CD14-positive monocyte (primary cell): ENCODE measurements at regions of chr19 and their contacts with region 1.

Region 1: DNA sequence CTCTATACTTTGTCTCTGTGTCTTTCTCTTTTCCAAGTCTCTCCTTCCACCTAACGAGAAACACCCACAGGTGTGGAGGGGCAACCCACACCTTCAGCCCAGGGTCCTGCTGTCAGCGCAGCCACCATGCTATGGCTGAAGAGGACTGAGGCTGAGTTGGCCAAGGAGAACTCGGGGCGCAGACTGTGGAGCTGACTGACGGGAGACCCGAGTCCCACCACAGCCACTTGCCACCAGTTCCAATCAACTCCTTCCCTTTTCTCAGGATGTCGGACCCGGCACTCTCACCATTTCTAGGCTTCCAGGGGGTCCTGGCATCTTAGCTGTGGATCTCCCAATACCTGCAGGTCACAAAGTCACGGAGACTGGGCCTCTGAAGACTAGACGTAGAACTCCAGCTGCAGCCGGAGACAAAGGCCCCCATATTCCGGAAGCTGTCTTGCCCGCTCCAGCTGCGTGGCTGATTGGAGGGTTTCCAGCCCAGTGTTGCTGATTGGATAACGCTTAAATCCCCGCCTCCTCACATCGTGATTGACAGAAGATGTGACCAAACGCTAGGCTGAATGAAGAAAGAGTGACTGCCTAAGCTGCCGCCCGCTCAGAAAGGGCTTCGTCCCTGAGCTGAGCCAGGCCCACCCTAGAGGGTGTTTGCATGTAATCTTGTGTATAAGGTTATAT is 63.6 kb downstream of the ZNF429 start:
- DNase-seq: peak; percentile 66 to 94 (median 87)
- H3K4me3 ChIP-seq: peak overlapping the region; percentile 32 to 67 (median 42)
- H3K4me3 Mint-ChIP-seq: peak overlapping the region; percentile 95 to 96
- H3K27ac ChIP-seq: peak overlapping the region; percentile 70 to 73
- H3K27ac Mint-ChIP-seq: peak overlapping the region; percentile 78 to 100 (median 98)
- H3K4me1 ChIP-seq: no peaks in the 10 kb centered on the region
- H3K4me1 Mint-ChIP-seq: peaks cover 24% of the 10 kb centered on the region
- H3K27me3 ChIP-seq: no peaks in the 10 kb centered on the region
- H3K27me3 Mint-ChIP-seq: no peaks in the 10 kb centered on the region
- CTCF ChIP-seq: no peak

Region 2: GRCh38 chr19:21362291-21362690 is 206.7 kb before region 1 on chr19:
- intact Hi-C with region 1: no loop called
- DNase-seq: no peak
- H3K4me3 ChIP-seq: no peak overlapping the region
- H3K4me3 Mint-ChIP-seq: no peak overlapping the region
- H3K27ac ChIP-seq: no peak overlapping the region
- H3K27ac Mint-ChIP-seq: no peak overlapping the region
- H3K4me1 ChIP-seq: peaks cover 7 to 8% of the 10 kb centered on the region in 2 donors
- H3K4me1 Mint-ChIP-seq: peaks cover 14% of the 10 kb centered on the region
- H3K27me3 ChIP-seq: no peaks in the 10 kb centered on the region
- H3K27me3 Mint-ChIP-seq: no peaks in the 10 kb centered on the region
- CTCF ChIP-seq: no peak

Region 3: DNA sequence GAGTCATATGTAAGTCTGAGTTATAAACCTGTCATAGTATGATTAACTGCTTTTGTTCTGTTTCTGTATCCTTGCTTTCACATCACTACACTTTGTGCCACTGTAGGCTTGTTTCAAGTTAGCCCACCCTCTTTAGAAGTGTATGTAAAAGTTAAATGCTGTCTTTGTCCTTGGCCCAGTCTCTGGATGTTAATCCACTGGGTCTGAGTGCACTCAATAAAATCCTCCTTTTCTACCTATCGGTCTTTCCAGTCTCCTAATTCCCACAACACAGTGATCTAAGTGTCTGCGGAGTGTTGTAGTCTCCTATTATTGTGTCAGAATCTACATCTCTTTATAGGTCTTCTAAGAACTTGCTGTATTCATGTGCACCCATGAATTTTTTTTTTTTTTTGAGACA is 49.5 kb before region 1 on chr19:
- intact Hi-C with region 1: loop called in 1 of 2 experiments (anchors 5 kb)
- DNase-seq: no peak
- H3K4me3 ChIP-seq: peak overlapping the region in 1 of 3 experiments; percentile 27
- H3K4me3 Mint-ChIP-seq: no peak overlapping the region
- H3K27ac ChIP-seq: no peak overlapping the region
- H3K27ac Mint-ChIP-seq: no peak overlapping the region
- H3K4me1 ChIP-seq: no peaks in the 10 kb centered on the region
- H3K4me1 Mint-ChIP-seq: no peaks in the 10 kb centered on the region
- H3K27me3 ChIP-seq: no peaks in the 10 kb centered on the region
- H3K27me3 Mint-ChIP-seq: peaks cover 0 to 2% (median 0%) of the 10 kb centered on the region in 3 donors
- CTCF ChIP-seq: no peak

Region 4: GRCh38 chr19:21593934-21594820 is 25.2 kb after region 1 on chr19:
- intact Hi-C with region 1: loop called in 1 of 2 experiments (anchors 1 kb)
- DNase-seq: peak; percentile 95 to 98 (median 95)
- H3K4me3 ChIP-seq: peak overlapping the region in 1 of 3 experiments; percentile 9
- H3K4me3 Mint-ChIP-seq: peak overlapping the region in 1 of 2 donors; percentile 21
- H3K27ac ChIP-seq: peak overlapping the region; percentile 90 to 99
- H3K27ac Mint-ChIP-seq: peak overlapping the region in 6 of 7 donors; percentile 95 to 99 (median 96)
- H3K4me1 ChIP-seq: peaks cover 36 to 38% of the 10 kb centered on the region in 2 donors
- H3K4me1 Mint-ChIP-seq: peaks cover 43% of the 10 kb centered on the region
- H3K27me3 ChIP-seq: no peaks in the 10 kb centered on the region
- H3K27me3 Mint-ChIP-seq: peaks cover 0 to 2% (median 1%) of the 10 kb centered on the region in 3 donors
- CTCF ChIP-seq: no peak

Region 5: GRCh38 chr19:21655540-21656126 is 86.7 kb after region 1 on chr19:
- intact Hi-C with region 1: loop called in 1 of 2 experiments (anchors 10 kb)
- DNase-seq: no peak
- H3K4me3 ChIP-seq: no peak overlapping the region
- H3K4me3 Mint-ChIP-seq: no peak overlapping the region
- H3K27ac ChIP-seq: no peak overlapping the region
- H3K27ac Mint-ChIP-seq: no peak overlapping the region
- H3K4me1 ChIP-seq: no peaks in the 10 kb centered on the region
- H3K4me1 Mint-ChIP-seq: no peaks in the 10 kb centered on the region
- H3K27me3 ChIP-seq: no peaks in the 10 kb centered on the region
- H3K27me3 Mint-ChIP-seq: no peaks in the 10 kb centered on the region
- CTCF ChIP-seq: no peak